ENCODE measurements at regions of chr15 and their contacts with region 1.

Region 1: DNA sequence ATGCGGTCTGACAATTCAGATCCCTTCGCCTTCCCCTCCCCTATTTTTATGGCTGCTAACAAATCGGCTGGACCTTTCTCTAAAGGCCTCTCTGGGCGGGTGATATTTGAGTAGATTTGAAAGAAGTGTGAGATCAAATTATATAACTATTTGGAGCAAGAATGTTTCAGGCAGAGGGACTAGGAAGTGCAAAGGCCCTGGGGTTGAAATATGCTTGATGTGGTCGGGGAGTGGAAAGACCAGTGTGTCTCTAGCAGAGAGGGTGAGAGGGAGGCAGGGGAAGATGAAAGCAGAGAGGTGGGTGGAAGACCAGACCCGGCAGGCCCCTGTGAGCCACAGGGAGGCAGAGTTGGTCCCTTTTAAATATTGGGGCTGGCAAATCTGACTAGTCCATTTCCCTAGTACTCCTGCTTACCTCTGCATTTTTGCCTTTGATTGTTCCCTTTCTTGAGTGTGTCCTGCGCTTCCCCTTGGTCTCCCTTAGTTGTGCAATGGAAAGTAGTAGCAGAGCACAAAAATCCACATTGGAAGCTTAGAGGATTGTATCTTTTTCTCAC is 32.3 kb downstream of the SLCO3A1 start:
- H3K4me3 Mint-ChIP-seq: no peak overlapping the region
- H3K27ac Mint-ChIP-seq: peak overlapping the region; percentile 78
- H3K4me1 Mint-ChIP-seq: peaks cover 76% of the 10 kb centered on the region
- H3K27me3 Mint-ChIP-seq: no peaks in the 10 kb centered on the region

Region 2: DNA sequence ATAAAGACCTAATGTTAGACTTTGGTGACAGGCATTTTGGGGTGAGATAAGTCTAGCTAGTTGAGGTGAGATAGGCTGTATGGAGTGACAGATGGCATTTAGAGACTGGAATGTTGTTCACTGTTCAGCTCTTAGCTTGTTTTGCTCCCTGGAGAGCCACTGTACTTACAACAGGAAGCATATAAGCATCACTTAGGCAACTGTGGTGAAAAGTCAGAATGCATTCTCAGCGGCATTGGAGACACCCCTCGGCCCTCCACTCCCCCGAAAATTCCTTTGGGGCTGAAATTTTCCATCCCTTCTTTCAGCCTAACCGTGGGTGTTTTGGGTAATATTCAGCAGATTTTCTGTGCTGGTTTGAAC is 41.1 kb after region 1 on chr15:
- intact Hi-C with region 1: loop called (anchors 5 kb)
- H3K4me3 Mint-ChIP-seq: no peak overlapping the region
- H3K27ac Mint-ChIP-seq: peak overlapping the region; percentile 33
- H3K4me1 Mint-ChIP-seq: peaks cover 57% of the 10 kb centered on the region
- H3K27me3 Mint-ChIP-seq: no peaks in the 10 kb centered on the region

Region 3: DNA sequence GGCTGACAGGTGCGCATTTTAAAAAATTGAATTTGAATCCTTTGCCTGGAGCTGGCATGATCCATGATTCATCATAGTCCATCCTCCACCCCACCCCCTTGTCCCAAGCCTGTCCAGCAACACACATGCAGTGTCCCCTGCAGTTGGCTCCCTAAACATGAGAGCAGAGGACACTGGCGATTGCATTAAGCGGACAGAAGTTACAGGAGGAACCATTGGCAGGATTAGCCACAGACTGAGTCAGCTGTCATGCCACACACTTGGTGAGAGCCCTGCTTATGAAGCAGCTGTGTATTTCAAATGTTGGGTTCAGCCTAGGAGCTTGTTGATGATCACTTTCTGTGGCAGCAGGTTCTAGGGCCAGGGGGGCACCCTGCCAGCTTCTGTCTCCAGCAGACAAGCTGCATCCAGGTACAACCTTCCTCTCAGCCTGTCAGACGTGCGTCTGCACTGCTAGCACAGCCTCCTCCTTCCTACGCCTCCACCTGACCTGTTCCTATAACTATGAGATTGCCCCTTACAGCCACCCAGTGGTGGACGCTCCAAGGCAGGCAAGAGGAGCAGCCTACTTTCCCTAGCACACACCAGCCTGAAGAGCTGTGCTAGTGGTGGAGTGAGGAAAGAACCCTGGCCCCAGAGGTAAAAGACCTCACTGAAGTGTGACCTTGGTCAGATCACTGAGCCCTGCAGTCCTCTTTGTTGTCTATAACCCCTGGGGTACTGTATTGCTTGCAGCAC is 89.6 kb after region 1 on chr15:
- intact Hi-C with region 1: loop called (anchors 5 kb)
- H3K4me3 Mint-ChIP-seq: no peak overlapping the region
- H3K27ac Mint-ChIP-seq: no peak overlapping the region
- H3K4me1 Mint-ChIP-seq: peaks cover 68% of the 10 kb centered on the region
- H3K27me3 Mint-ChIP-seq: no peaks in the 10 kb centered on the region

Region 4: GRCh38 chr15:92034227-92034626 is 148.4 kb after region 1 on chr15:
- intact Hi-C with region 1: no loop called
- H3K4me3 Mint-ChIP-seq: no peak overlapping the region
- H3K27ac Mint-ChIP-seq: no peak overlapping the region
- H3K4me1 Mint-ChIP-seq: peaks cover 48% of the 10 kb centered on the region
- H3K27me3 Mint-ChIP-seq: no peaks in the 10 kb centered on the region

Measured in dendritic cell treated with granulocyte-macrophage colony-stimulating factor and Interleukin-4, amounts not matched to agents 40 ng/mL and 50 ng/mL, for 4 days (primary cell).